ENCODE measurements at regions of chr3 and their contacts with region 1.

Region 1: DNA sequence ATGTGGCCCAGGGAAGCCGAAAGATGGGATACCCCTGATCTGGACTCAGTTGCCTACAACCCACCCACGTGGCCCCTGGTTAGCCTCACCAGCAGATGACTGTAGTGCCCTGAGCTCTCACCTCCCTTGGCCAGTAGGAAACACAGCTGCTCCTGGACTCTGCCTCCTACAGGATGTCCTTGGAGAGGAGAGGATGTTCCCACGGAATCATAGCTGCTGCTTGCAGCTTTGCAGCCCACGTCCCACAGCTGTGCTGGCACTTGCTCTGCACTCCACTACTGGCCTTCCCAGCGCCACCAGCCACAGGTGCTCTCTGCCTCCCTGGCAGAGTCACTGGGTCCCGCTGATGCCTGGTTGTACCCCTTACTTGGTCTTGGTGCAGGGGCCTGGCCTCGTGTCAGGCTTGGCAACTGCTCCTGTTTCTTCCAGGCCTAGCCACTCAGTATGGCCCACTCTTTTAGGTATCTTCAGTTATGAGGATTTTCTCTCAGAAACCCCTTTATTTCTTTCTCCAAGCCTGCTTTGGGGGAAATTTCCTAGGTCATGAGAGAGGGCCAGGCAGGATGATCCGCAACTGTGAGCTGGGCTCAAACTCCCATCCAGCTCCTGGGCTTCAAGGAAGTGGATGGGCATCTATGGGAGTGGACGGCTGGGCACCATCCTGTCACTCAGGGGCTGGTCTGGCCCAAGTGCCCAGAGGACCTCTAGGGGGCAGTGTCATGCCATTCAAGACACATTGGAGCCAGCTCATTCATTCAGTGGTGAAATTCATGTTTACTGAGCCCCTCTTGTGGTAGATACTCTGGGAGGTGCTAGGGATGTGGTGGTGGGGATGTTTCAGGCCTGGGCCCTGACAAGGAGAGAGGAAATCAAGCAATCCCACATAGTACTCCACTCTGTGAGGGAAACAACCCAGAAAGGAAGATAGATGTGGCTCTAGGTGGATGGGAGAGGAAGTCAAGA is 16.2 kb upstream of the VILL start:
- DNase-seq: peak; percentile 82 to 91 (median 86)
- ATAC-seq: peak; percentile 99
- H3K4me3 ChIP-seq: no peak overlapping the region
- H3K27ac ChIP-seq: no peak overlapping the region
- H3K4me1 ChIP-seq: peaks cover 0 to 3% of the 10 kb centered on the region in 2 experiments; a peak in 2 of 5 replicates
- H3K27me3 ChIP-seq: no peaks in the 10 kb centered on the region
- CTCF ChIP-seq: peak; percentile 98 to 99 (median 98)
- EP300 ChIP-seq: peak; percentile 44; the same call in 1 of the 2 replicates
- POLR2A ChIP-seq: no peak
- RAD21 ChIP-seq: peak; percentile 91 to 97

Region 2: DNA sequence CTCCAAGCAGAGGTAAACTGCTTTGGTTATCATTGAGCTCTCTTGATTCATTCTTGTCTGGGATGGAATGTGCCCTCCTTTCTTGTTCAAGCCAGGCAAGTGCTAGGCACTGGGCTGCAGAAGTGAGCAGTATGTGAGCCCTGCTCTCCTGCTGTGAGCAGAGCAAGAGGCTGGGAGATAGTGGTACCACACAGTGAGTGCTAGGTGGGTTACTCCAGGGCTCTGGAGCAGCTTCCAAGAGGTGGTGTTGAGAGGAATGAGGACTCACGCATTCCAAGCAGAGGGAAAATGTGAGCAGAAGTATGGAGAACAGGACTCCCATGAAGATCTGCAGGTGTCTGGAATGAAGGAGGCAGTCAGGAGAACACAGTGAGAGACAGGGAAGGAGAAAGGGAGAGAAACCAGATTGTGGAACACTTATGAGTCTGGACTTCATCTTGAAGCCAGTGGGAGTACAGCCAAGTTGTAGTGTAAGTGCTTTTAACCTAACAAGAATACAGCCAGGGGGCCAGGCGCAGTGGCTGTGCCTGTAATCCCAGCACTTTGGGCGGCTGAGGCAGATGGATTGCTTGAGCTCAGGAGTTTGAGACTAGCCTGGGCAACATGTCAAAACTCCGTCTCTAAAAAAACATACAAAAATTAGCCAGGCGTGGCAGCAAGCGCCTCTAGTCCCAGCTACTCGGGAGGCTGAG is 312.6 kb before region 1 on chr3:
- CTCF ChIA-PET with region 1: no interaction called
- POLR2A ChIA-PET with region 1: no interaction called
- in situ Hi-C with region 1: no loop called
- intact Hi-C with region 1: no loop called
- DNase-seq: no peak
- ATAC-seq: no peak
- H3K4me3 ChIP-seq: no peak overlapping the region
- H3K27ac ChIP-seq: no peak overlapping the region
- H3K4me1 ChIP-seq: no peaks in the 10 kb centered on the region
- H3K27me3 ChIP-seq: 0 out of 5 replicates have a peak, but pooled peaks cover 2 to 6% of the 10 kb centered on the region in 2 experiments
- CTCF ChIP-seq: no peak
- EP300 ChIP-seq: no peak
- POLR2A ChIP-seq: no peak
- RAD21 ChIP-seq: no peak

Region 3: GRCh38 chr3:37855363-37855970 is 118.9 kb before region 1 on chr3:
- CTCF ChIA-PET with region 1: interaction called, 3 read pairs
- POLR2A ChIA-PET with region 1: interaction called, 3 read pairs
- in situ Hi-C with region 1: loop called (anchors 5 kb)
- intact Hi-C with region 1: no loop called
- DNase-seq: peak; percentile 80 to 86 (median 83)
- ATAC-seq: peak; percentile 83
- H3K4me3 ChIP-seq: no peak overlapping the region
- H3K27ac ChIP-seq: no peak overlapping the region
- H3K4me1 ChIP-seq: peaks cover 8 to 15% of the 10 kb centered on the region in 2 experiments
- H3K27me3 ChIP-seq: no peaks in the 10 kb centered on the region; a peak in 1 of 5 replicates
- CTCF ChIP-seq: peak; percentile 95 to 98 (median 97)
- EP300 ChIP-seq: no peak
- POLR2A ChIP-seq: no peak
- RAD21 ChIP-seq: peak; percentile 97 to 99

Region 4: GRCh38 chr3:38004415-38005076 is 30.1 kb after region 1 on chr3:
- CTCF ChIA-PET with region 1: interaction called, 62 read pairs
- POLR2A ChIA-PET with region 1: interaction called, 3 read pairs
- in situ Hi-C with region 1: no loop called
- intact Hi-C with region 1: loop called (anchors 1 kb)
- DNase-seq: peak in 3 of 4 experiments; percentile 54 to 87 (median 72)
- ATAC-seq: peak; percentile 86
- H3K4me3 ChIP-seq: no peak overlapping the region
- H3K27ac ChIP-seq: no peak overlapping the region
- H3K4me1 ChIP-seq: peaks cover 6 to 48% of the 10 kb centered on the region in 2 experiments; a peak in 4 of 5 replicates
- H3K27me3 ChIP-seq: no peaks in the 10 kb centered on the region
- CTCF ChIP-seq: peak; percentile 84 to 93 (median 88)
- EP300 ChIP-seq: no peak
- POLR2A ChIP-seq: no peak
- RAD21 ChIP-seq: peak; percentile 63 to 85

Region 5: DNA sequence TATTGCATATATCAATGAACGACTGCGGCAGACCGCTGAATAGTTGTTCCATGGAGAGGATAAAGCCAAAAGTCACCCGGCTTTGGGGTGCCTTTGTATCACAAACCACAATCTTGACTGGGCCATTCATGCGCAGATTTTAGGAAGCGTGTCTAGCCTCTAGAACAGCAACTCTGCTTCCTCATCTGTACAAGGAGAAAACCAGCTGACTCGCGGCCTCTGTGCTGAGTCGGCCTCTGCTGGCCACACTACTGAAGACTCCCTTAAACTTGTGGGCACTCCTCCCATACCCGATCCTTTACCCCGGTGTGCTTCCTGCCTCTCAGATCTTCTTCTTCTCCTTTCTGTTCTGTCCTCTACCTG is 65.5 kb after region 1 on chr3:
- CTCF ChIA-PET with region 1: no interaction called
- POLR2A ChIA-PET with region 1: no interaction called
- in situ Hi-C with region 1: no loop called
- intact Hi-C with region 1: loop called (anchors 1 kb)
- DNase-seq: peak in 3 of 4 experiments; percentile 49 to 63 (median 54)
- ATAC-seq: peak; percentile 92
- H3K4me3 ChIP-seq: no peak overlapping the region
- H3K27ac ChIP-seq: no peak overlapping the region
- H3K4me1 ChIP-seq: peaks cover 4 to 9% of the 10 kb centered on the region in 2 experiments; a peak in 4 of 5 replicates
- H3K27me3 ChIP-seq: peaks cover 15 to 44% of the 10 kb centered on the region in 2 experiments; a peak in 4 of 5 replicates
- CTCF ChIP-seq: peak; percentile 57 to 73 (median 60)
- EP300 ChIP-seq: no peak
- POLR2A ChIP-seq: no peak
- RAD21 ChIP-seq: peak; percentile 73 to 74

Region 6: GRCh38 chr3:38479431-38480092 is 505.2 kb after region 1 on chr3:
- CTCF ChIA-PET with region 1: interaction called, 3 read pairs
- POLR2A ChIA-PET with region 1: no interaction called
- in situ Hi-C with region 1: no loop called
- intact Hi-C with region 1: loop called (anchors 5 kb)
- DNase-seq: peak; percentile 64 to 73 (median 70)
- ATAC-seq: peak; percentile 88
- H3K4me3 ChIP-seq: no peak overlapping the region
- H3K27ac ChIP-seq: no peak overlapping the region
- H3K4me1 ChIP-seq: peaks cover 0 to 3% of the 10 kb centered on the region in 2 experiments; a peak in 1 of 5 replicates
- H3K27me3 ChIP-seq: no peaks in the 10 kb centered on the region
- CTCF ChIP-seq: peak; percentile 80 to 91 (median 86)
- EP300 ChIP-seq: no peak
- POLR2A ChIP-seq: no peak
- RAD21 ChIP-seq: peak; percentile 85 to 87

Measured in K562 (cell line).